GM12878 (cell line): ENCODE measurements at regions of chr18 and their contacts with region 1.

Region 1: GRCh38 chr18:5057386-5058348 is 139.4 kb downstream of the AKAIN1 start:
- DNase-seq: peak; percentile 32
- ATAC-seq: peak; percentile 79
- H3K4me3 ChIP-seq: no peak overlapping the region
- H3K27ac ChIP-seq: no peak overlapping the region
- H3K4me1 ChIP-seq: no peaks in the 10 kb centered on the region; the same call in 1 of the 2 replicates
- H3K27me3 ChIP-seq: no peaks in the 10 kb centered on the region
- CTCF ChIP-seq: peak; percentile 72 to 93 (median 74); a peak in 4 of 6 replicates
- EP300 ChIP-seq: no peak
- POLR2A ChIP-seq: no peak
- RAD21 ChIP-seq: peak; percentile 92

Region 2: DNA sequence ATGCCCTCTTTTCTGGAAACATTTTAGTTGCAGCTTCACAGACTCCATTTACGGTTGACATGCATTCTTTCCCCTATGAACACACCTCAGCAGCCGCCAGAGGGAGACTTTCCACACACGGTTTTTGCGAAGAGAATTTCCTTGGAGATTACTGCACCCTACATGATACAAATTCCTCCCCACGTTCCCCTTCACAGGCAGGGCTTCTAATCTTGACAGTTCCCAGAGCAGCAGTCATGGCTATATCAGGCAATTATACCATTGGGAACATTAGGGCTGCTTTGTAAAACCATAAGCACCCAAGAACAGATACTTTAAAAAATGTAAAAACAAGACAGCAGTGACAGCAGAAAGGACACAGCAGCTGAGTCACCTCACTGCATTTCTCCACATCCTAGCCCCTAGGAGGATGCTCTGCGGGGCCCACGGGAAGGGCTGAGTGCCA is 1353.9 kb before region 1 on chr18:
- CTCF ChIA-PET with region 1: interaction called, 4 read pairs
- POLR2A ChIA-PET with region 1: no interaction called
- RAD21 ChIA-PET with region 1: interaction called, 8 read pairs
- SMC1A ChIA-PET with region 1: interaction called, 3 read pairs
- in situ Hi-C with region 1: no loop called
- intact Hi-C with region 1: loop called (anchors 5 kb)
- DNase-seq: no peak
- ATAC-seq: peak; percentile 79
- H3K4me3 ChIP-seq: no peak overlapping the region
- H3K27ac ChIP-seq: no peak overlapping the region
- H3K4me1 ChIP-seq: no peaks in the 10 kb centered on the region
- H3K27me3 ChIP-seq: no peaks in the 10 kb centered on the region
- CTCF ChIP-seq: peak; percentile 60 to 74 (median 61)
- EP300 ChIP-seq: no peak
- POLR2A ChIP-seq: no peak
- RAD21 ChIP-seq: peak; percentile 55

Region 3: DNA sequence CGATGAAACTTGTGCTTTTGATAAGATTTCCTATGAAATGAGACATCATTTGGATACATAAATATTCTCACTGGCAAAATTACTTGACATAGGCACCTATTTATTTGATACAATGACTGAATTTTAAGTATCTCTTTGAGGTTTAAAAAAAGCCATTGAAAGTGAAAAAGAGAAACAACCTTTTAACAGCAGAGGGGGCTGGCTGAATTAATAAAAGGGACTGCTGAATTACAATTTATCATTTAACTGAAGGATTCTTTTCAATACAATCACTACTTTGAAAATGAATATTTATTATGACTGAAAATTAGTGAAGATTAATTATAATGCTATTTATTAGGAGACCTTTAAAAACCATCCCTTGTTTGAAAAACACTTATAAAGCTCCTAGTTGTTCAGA is 937.9 kb before region 1 on chr18:
- CTCF ChIA-PET with region 1: interaction called, 11 read pairs
- POLR2A ChIA-PET with region 1: no interaction called
- RAD21 ChIA-PET with region 1: interaction called, 8 read pairs
- SMC1A ChIA-PET with region 1: interaction called, 18 read pairs
- in situ Hi-C with region 1: no loop called
- intact Hi-C with region 1: no loop called
- DNase-seq: no peak
- ATAC-seq: no peak
- H3K4me3 ChIP-seq: no peak overlapping the region
- H3K27ac ChIP-seq: no peak overlapping the region
- H3K4me1 ChIP-seq: no peaks in the 10 kb centered on the region
- H3K27me3 ChIP-seq: no peaks in the 10 kb centered on the region
- CTCF ChIP-seq: no peak; a peak in 1 of 6 replicates
- EP300 ChIP-seq: no peak
- POLR2A ChIP-seq: no peak
- RAD21 ChIP-seq: 0 out of 2 replicates have a peak, but pooled peaks have one; percentile 4

Region 4: GRCh38 chr18:4283746-4284291 is 773.8 kb before region 1 on chr18:
- CTCF ChIA-PET with region 1: no interaction called
- POLR2A ChIA-PET with region 1: no interaction called
- RAD21 ChIA-PET with region 1: interaction called, 3 read pairs
- SMC1A ChIA-PET with region 1: no interaction called
- in situ Hi-C with region 1: no loop called
- intact Hi-C with region 1: loop called (anchors 10 kb)
- DNase-seq: no peak
- ATAC-seq: peak; percentile 45
- H3K4me3 ChIP-seq: no peak overlapping the region
- H3K27ac ChIP-seq: no peak overlapping the region
- H3K4me1 ChIP-seq: no peaks in the 10 kb centered on the region
- H3K27me3 ChIP-seq: no peaks in the 10 kb centered on the region
- CTCF ChIP-seq: no peak
- EP300 ChIP-seq: no peak
- POLR2A ChIP-seq: no peak
- RAD21 ChIP-seq: no peak

Region 5: GRCh38 chr18:4450065-4450658 is 607.5 kb before region 1 on chr18:
- CTCF ChIA-PET with region 1: interaction called, 26 read pairs
- POLR2A ChIA-PET with region 1: no interaction called
- RAD21 ChIA-PET with region 1: interaction called, 22 read pairs
- SMC1A ChIA-PET with region 1: interaction called, 23 read pairs
- in situ Hi-C with region 1: no loop called
- intact Hi-C with region 1: loop called (anchors 1 kb)
- DNase-seq: no peak
- ATAC-seq: peak; percentile 13
- H3K4me3 ChIP-seq: no peak overlapping the region
- H3K27ac ChIP-seq: no peak overlapping the region
- H3K4me1 ChIP-seq: no peaks in the 10 kb centered on the region
- H3K27me3 ChIP-seq: no peaks in the 10 kb centered on the region
- CTCF ChIP-seq: peak in 2 of 3 experiments; percentile 4 to 43; a peak in 2 of 6 replicates
- EP300 ChIP-seq: no peak
- POLR2A ChIP-seq: no peak
- RAD21 ChIP-seq: no peak

Region 6: DNA sequence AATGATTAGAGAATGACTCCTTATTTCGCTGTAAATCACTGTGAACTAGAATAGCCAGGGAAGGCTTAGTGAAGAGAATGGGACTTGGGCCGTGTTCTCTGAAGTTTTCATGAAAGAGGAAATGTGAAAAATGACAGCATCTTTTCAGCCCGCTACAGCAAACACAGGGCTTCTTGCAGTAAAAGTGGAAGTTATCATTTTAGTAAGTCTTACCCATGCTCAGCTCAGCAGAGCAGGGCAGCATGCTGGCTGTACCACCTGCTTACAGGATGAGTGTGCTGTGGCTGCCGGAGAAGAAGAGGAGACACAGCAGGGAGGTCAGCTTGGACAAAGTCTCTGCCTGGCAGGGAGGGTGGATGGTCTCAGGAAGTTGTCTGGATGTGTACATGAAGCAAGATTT is 301.8 kb before region 1 on chr18:
- CTCF ChIA-PET with region 1: no interaction called
- POLR2A ChIA-PET with region 1: no interaction called
- RAD21 ChIA-PET with region 1: no interaction called
- SMC1A ChIA-PET with region 1: interaction called, 3 read pairs
- in situ Hi-C with region 1: no loop called
- intact Hi-C with region 1: loop called (anchors 5 kb)
- DNase-seq: peak; percentile 71
- ATAC-seq: peak; percentile 92
- H3K4me3 ChIP-seq: no peak overlapping the region
- H3K27ac ChIP-seq: no peak overlapping the region
- H3K4me1 ChIP-seq: no peaks in the 10 kb centered on the region; the same call in 1 of the 2 replicates
- H3K27me3 ChIP-seq: no peaks in the 10 kb centered on the region
- CTCF ChIP-seq: no peak
- EP300 ChIP-seq: peak in 1 of 2 experiments; percentile 59; a peak in 1 of 4 replicates
- POLR2A ChIP-seq: no peak
- RAD21 ChIP-seq: no peak